Cardiac septum (tissue), 1 donor: ENCODE measurements at regions of chr6 and their contacts with region 1.

Region 1: GRCh38 chr6:168132531-168133167 is 53.6 kb upstream of the FRMD1 start:
- DNase-seq: no peak

Region 2: GRCh38 chr6:167839755-167840154 is 292.9 kb before region 1 on chr6:
- intact Hi-C with region 1: no loop called
- DNase-seq: no peak

Region 3: GRCh38 chr6:167907837-167908681 is 224.6 kb before region 1 on chr6:
- intact Hi-C with region 1: loop called (anchors 2 kb)
- DNase-seq: no peak

Region 4: GRCh38 chr6:168060521-168060931 is 72.1 kb before region 1 on chr6:
- intact Hi-C with region 1: loop called (anchors 2 kb)
- DNase-seq: peak; percentile 88